ENCODE measurements at regions of chr16 and their contacts with region 1.

Region 1: GRCh38 chr16:69186642-69187445 is at the start of gene SNTB2:
- DNase-seq: peak; percentile 68 to 89 (median 78)
- ATAC-seq: peak; percentile 90
- H3K4me3 ChIP-seq: peak within 1 kb of the TSS; percentile 83
- H3K4me3 Mint-ChIP-seq: peak within 1 kb of the TSS; percentile 88 to 100 (median 99)
- H3K27ac ChIP-seq: peak within 1 kb of the TSS; percentile 77
- H3K27ac Mint-ChIP-seq: peak within 1 kb of the TSS; percentile 89 to 99 (median 96)
- H3K4me1 ChIP-seq: peaks cover 13 to 32% of the 10 kb centered on the region in 2 donors
- H3K4me1 Mint-ChIP-seq: peaks cover 23 to 46% (median 39%) of the 10 kb centered on the region in 7 donors
- H3K27me3 ChIP-seq: no peaks in the 10 kb centered on the region
- H3K27me3 Mint-ChIP-seq: no peaks in the 10 kb centered on the region
- total RNA-seq, gene SNTB2: 9.7 to 16.4 (median 12.1) TPM

Region 2: DNA sequence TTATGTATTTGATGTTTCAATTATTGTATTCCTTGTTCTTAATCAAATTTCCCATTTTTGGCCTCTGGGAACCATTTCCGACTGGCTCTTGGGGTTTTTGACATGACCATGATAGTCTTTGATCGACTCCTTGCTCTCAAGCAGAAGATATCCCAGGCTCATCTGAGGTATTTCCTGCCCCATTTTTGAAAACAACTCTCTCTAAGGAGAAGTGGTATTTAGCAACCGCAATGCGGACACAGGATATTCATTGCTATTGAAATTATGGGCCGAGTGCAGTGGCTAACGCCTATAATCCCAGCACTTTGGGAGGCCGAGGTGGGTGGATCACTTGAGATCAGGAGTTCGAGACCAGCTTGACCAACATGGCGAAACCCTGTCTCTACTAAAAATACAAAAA is 338.1 kb before region 1 on chr16:
- CTCF ChIA-PET with region 1: no interaction called
- POLR2A ChIA-PET with region 1: no interaction called
- intact Hi-C with region 1: loop called in 1 of 2 experiments (anchors 5 kb)
- DNase-seq: no peak
- ATAC-seq: no peak
- H3K4me3 ChIP-seq: no peak overlapping the region
- H3K4me3 Mint-ChIP-seq: no peak overlapping the region
- H3K27ac ChIP-seq: no peak overlapping the region
- H3K27ac Mint-ChIP-seq: peak overlapping the region in 1 of 9 donors; percentile 18
- H3K4me1 ChIP-seq: peaks cover 7 to 15% of the 10 kb centered on the region in 2 donors
- H3K4me1 Mint-ChIP-seq: peaks cover 20 to 66% (median 42%) of the 10 kb centered on the region in 7 donors
- H3K27me3 ChIP-seq: no peaks in the 10 kb centered on the region
- H3K27me3 Mint-ChIP-seq: no peaks in the 10 kb centered on the region

Region 3: GRCh38 chr16:69150146-69150865 is 36.5 kb before region 1 on chr16:
- CTCF ChIA-PET with region 1: interaction called, 8 read pairs
- POLR2A ChIA-PET with region 1: interaction called, 6 read pairs
- intact Hi-C with region 1: loop called (anchors 1 to 5 kb)
- DNase-seq: peak in 7 of 9 donors; percentile 41 to 70 (median 63)
- ATAC-seq: peak; percentile 84
- H3K4me3 ChIP-seq: no peak overlapping the region
- H3K4me3 Mint-ChIP-seq: no peak overlapping the region
- H3K27ac ChIP-seq: no peak overlapping the region
- H3K27ac Mint-ChIP-seq: peak overlapping the region in 1 of 9 donors; percentile 2
- H3K4me1 ChIP-seq: no peaks in the 10 kb centered on the region
- H3K4me1 Mint-ChIP-seq: peaks cover 0 to 5% (median 3%) of the 10 kb centered on the region in 7 donors
- H3K27me3 ChIP-seq: no peaks in the 10 kb centered on the region
- H3K27me3 Mint-ChIP-seq: no peaks in the 10 kb centered on the region

Region 4: GRCh38 chr16:69253870-69254341 is 67.1 kb after region 1 on chr16:
- CTCF ChIA-PET with region 1: no interaction called
- POLR2A ChIA-PET with region 1: no interaction called
- intact Hi-C with region 1: loop called in 1 of 2 experiments (anchors 5 kb)
- DNase-seq: no peak
- ATAC-seq: peak; percentile 37
- H3K4me3 ChIP-seq: no peak overlapping the region
- H3K4me3 Mint-ChIP-seq: no peak overlapping the region
- H3K27ac ChIP-seq: no peak overlapping the region
- H3K27ac Mint-ChIP-seq: peak overlapping the region in 3 of 9 donors; percentile 21 to 46 (median 28)
- H3K4me1 ChIP-seq: peaks cover 0 to 11% of the 10 kb centered on the region in 2 donors
- H3K4me1 Mint-ChIP-seq: peaks cover 0 to 13% (median 4%) of the 10 kb centered on the region in 7 donors
- H3K27me3 ChIP-seq: no peaks in the 10 kb centered on the region
- H3K27me3 Mint-ChIP-seq: no peaks in the 10 kb centered on the region

Region 5: DNA sequence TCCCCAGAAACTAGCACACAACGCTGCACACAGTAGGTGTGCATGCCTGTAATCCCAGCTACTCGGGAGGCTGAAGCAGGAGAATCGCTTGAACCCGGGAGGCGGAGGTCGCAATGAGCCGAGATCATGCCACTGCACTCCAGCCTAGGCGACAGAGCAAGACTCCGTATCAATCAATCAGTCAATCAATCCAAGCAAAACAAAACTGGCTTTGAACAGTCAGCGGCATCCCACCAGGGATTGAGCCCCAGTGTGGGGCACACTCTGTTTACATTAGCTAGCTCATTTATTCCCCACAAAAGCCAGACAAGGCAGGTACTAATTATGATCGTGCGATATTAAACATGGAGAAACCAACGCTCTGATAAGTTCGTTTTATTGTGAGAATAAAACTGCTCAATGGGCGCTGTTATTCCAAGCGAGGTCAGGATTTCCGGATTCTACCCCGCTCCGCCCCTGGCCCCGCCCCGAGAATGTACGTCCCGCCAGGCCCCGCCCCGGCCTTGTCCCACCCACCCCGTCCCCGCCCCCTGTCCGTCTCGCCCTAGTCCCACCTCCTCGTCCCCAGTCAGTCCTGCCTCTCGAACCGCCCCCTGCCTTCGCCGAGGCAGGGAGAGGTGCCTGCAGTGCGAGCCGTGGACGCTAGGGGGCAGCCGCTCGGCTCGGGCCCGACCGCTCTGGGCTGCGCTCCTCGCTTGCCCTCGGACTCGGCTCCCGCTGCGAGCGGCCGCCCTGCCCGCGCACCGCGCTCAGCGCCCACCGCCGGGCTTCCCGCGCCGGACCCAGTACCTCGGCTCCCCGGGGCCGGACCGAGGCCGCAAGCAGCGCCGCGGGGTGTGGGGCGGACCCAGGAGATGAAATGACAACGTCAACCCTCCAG is 124.0 kb after region 1 on chr16 and contains the start of gene VPS4A:
- CTCF ChIA-PET with region 1: no interaction called
- POLR2A ChIA-PET with region 1: interaction called, 3 read pairs
- intact Hi-C with region 1: loop called (anchors 1 kb)
- DNase-seq: peak; percentile 95 to 99 (median 97)
- ATAC-seq: peak; percentile 99
- H3K4me3 ChIP-seq: peak within 1 kb of the TSS; percentile 74
- H3K4me3 Mint-ChIP-seq: peak within 1 kb of the TSS; percentile 90 to 100 (median 99)
- H3K27ac ChIP-seq: peak within 1 kb of the TSS; percentile 94
- H3K27ac Mint-ChIP-seq: peak within 1 kb of the TSS; percentile 92 to 99 (median 95)
- H3K4me1 ChIP-seq: peaks cover 8 to 10% of the 10 kb centered on the region in 2 donors
- H3K4me1 Mint-ChIP-seq: peaks cover 17 to 36% (median 29%) of the 10 kb centered on the region in 7 donors
- H3K27me3 ChIP-seq: no peaks in the 10 kb centered on the region
- H3K27me3 Mint-ChIP-seq: no peaks in the 10 kb centered on the region
- total RNA-seq, gene VPS4A: 36.7 to 53.7 (median 46.9) TPM

Region 6: GRCh38 chr16:69339289-69340108 is 152.7 kb after region 1 on chr16 and contains the starts of genes COG8 and NIP7:
- CTCF ChIA-PET with region 1: no interaction called
- POLR2A ChIA-PET with region 1: interaction called, 3 read pairs
- intact Hi-C with region 1: loop called in 1 of 2 experiments (anchors 1 kb)
- DNase-seq: peak; percentile 78 to 91 (median 90)
- ATAC-seq: peak; percentile 95
- H3K4me3 ChIP-seq: peak within 1 kb of the TSS; percentile 80
- H3K4me3 Mint-ChIP-seq: peak within 1 kb of the TSS; percentile 97 to 100 (median 99)
- H3K27ac ChIP-seq: peak within 1 kb of the TSS; percentile 86
- H3K27ac Mint-ChIP-seq: peak within 1 kb of the TSS; percentile 95 to 99 (median 98)
- H3K4me1 ChIP-seq: peaks cover 20 to 25% of the 10 kb centered on the region in 2 donors
- H3K4me1 Mint-ChIP-seq: peaks cover 31 to 70% (median 49%) of the 10 kb centered on the region in 7 donors
- H3K27me3 ChIP-seq: no peaks in the 10 kb centered on the region
- H3K27me3 Mint-ChIP-seq: no peaks in the 10 kb centered on the region
- total RNA-seq, gene COG8: 29.5 to 73.7 (median 37.4) TPM
- total RNA-seq, gene NIP7: 22.1 to 40.9 (median 30.3) TPM